ENCODE measurements at regions of chr3 and their contacts with region 1.

Region 1: DNA sequence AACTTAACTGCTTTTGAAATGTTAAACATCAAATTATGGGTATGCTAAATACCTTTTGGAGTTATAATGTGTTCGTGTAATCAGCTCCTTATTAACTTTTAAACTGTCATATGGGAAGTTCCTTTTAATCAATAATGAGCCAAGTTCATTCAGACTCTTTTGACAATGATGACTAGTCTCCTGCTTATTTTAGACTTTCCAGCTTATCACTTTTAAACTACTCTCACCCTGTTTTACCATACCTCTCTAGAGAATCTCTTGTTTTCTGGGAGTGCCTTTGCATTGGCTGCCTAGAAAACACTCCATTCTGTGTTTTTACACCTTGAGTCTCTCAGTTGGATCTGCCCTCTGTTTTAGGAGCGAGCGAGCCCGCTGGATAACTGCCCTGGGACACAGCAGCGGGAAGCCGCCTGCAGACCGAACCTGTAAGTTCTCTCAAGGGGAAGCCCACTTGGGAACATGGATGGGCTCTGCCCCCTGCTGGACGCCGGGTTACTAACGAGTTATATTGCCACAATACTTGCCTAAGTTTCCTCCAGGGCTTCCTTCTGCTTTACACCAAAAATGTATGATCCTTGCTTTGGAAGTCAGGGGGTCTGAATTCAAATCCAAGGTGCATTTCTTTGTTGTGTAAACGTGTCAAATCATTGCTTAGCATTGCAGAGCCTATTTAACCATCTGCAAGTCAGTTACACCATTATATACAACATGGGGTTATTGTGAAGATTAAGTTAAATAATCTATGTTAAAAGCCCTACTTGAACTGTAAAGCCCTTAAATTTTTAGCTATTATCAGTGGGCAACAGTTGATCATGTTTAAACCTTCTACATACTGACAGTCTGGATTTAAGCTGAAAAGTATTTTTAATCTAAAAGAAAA is 71.3 kb downstream of the DHX36 start:
- DNase-seq: peak; percentile 83 to 94
- H3K4me3 ChIP-seq: no peak overlapping the region
- H3K27ac ChIP-seq: no peak overlapping the region
- H3K4me1 ChIP-seq: peaks cover 0 to 2% (median under 1%) of the 10 kb centered on the region in 4 experiments; a peak in 1 of 7 replicates
- H3K27me3 ChIP-seq: no peaks in the 10 kb centered on the region
- CTCF ChIP-seq: peak; percentile 82 to 98 (median 92)
- EP300 ChIP-seq: no peak
- POLR2A ChIP-seq: no peak
- RAD21 ChIP-seq: peak; percentile 96 to 98

Region 2: DNA sequence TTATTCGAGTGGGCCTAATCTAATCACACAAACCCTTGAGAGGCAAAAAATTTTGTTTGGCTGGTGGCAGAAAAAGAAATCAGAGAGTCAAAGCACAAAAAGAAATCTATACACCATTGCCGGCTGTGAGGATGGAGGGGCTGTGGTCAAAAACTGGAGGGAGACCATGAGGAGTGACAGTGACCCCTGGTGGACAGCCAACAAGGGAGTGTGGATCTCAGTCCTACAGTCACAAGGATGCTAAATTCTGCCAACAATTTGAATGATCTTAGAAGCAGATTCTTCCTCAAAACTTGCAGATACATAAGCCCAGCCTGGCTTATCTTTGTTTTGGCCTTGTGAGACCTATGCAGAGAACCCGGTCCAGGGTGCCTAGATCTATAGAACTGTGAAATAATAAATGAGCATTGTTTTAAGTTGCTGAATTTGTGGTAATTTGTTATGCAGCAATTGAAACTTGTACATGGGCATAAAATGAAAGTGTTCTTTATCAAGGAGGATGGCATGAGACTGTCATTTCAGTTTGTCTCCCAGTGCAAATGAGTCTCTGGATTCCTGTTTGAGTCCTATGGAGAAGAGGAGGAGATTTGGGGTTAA is 234.8 kb before region 1 on chr3:
- CTCF ChIA-PET with region 1: interaction called, 11 read pairs
- POLR2A ChIA-PET with region 1: no interaction called
- DNase-seq: peak; percentile 21 to 73
- H3K4me3 ChIP-seq: no peak overlapping the region
- H3K27ac ChIP-seq: no peak overlapping the region
- H3K4me1 ChIP-seq: peaks cover 0 to 3% (median 0%) of the 10 kb centered on the region in 4 experiments; a peak in 1 of 7 replicates
- H3K27me3 ChIP-seq: no peaks in the 10 kb centered on the region
- CTCF ChIP-seq: peak; percentile 64 to 85 (median 72)
- EP300 ChIP-seq: no peak
- POLR2A ChIP-seq: no peak
- RAD21 ChIP-seq: peak; percentile 70 to 74

Region 3: GRCh38 chr3:154089452-154090420 is 163.3 kb before region 1 on chr3:
- CTCF ChIA-PET with region 1: interaction called, 26 read pairs
- POLR2A ChIA-PET with region 1: no interaction called
- DNase-seq: no peak
- H3K4me3 ChIP-seq: no peak overlapping the region
- H3K27ac ChIP-seq: no peak overlapping the region
- H3K4me1 ChIP-seq: peaks cover 0 to 4% (median 0%) of the 10 kb centered on the region in 4 experiments; a peak in 1 of 7 replicates
- H3K27me3 ChIP-seq: no peaks in the 10 kb centered on the region
- CTCF ChIP-seq: no peak
- EP300 ChIP-seq: no peak
- POLR2A ChIP-seq: no peak
- RAD21 ChIP-seq: no peak

Region 4: DNA sequence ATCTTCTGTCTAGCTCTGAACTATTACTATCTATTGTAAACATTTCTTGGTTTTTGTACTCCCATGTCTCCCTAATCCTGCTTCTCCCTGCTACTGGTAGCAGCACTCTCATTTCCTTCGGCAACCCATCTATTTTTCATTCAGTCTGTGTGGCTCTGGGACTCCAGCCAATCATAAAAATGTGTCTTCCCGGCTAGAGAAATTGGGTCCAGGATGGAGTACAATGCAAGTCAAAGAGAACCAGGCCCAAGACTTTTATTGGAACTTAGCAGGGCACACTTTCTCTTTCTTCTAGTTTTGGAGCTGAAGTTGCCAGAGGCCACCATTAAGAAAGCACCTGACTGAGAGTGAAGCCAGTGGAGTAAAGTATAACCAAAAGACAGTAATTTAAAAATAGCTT is 154.6 kb before region 1 on chr3:
- CTCF ChIA-PET with region 1: interaction called, 28 read pairs
- POLR2A ChIA-PET with region 1: interaction called, 3 read pairs
- DNase-seq: no peak
- H3K4me3 ChIP-seq: no peak overlapping the region
- H3K27ac ChIP-seq: no peak overlapping the region
- H3K4me1 ChIP-seq: no peaks in the 10 kb centered on the region
- H3K27me3 ChIP-seq: no peaks in the 10 kb centered on the region
- CTCF ChIP-seq: no peak
- EP300 ChIP-seq: no peak
- POLR2A ChIP-seq: no peak
- RAD21 ChIP-seq: no peak

Region 5: GRCh38 chr3:154112146-154112852 is 140.7 kb before region 1 on chr3:
- CTCF ChIA-PET with region 1: interaction called, 12 read pairs
- POLR2A ChIA-PET with region 1: interaction called, 3 read pairs
- DNase-seq: no peak
- H3K4me3 ChIP-seq: no peak overlapping the region
- H3K27ac ChIP-seq: no peak overlapping the region
- H3K4me1 ChIP-seq: no peaks in the 10 kb centered on the region
- H3K27me3 ChIP-seq: no peaks in the 10 kb centered on the region
- CTCF ChIP-seq: no peak
- EP300 ChIP-seq: no peak
- POLR2A ChIP-seq: no peak
- RAD21 ChIP-seq: no peak

Region 6: DNA sequence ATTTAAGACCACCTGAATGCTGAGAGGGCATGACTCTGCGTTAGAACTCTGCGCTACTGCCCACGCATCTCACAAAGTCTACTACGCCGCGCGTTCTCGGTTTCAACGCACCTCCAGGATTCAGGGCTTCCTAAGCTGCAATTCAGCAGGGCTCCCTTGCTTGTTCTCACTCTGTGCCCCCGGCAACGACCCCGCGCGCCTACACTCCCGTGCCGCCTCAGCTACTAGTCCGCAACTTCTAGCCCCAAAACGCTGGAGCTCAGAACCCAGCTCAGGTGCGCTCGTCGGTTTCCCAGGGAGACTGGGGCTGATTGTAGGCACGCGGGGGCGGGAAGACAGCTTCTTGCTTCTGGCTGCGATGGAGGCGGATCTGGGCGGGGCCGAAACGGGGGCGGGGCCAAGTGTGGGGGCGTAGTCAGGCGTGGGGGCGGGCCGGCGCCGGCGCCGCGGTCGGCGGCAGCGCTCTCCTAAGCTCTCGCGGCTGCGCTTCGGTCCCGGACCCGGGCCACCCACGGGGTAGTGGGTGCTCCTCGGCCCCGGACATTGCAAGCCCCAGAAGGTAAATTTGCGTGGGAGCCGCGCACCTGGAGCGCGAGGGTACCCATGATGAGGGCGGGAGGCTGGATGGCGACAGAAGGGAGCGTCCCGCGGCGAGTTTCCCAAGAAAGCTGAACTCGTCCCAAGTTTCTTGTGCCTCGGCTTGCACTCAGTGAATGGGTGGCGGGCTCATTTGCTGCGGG is 131.9 kb before region 1 on chr3 and contains the start of gene ARHGEF26:
- CTCF ChIA-PET with region 1: interaction called, 24 read pairs
- POLR2A ChIA-PET with region 1: no interaction called
- DNase-seq: peak; percentile 59 to 98
- H3K4me3 ChIP-seq: peak within 1 kb of the TSS; percentile 75 to 85 (median 82)
- H3K27ac ChIP-seq: no peak within 1 kb of the TSS
- H3K4me1 ChIP-seq: peaks cover 0 to 5% (median 1%) of the 10 kb centered on the region in 4 experiments; a peak in 2 of 7 replicates
- H3K27me3 ChIP-seq: peaks cover 0 to 20% (median 11%) of the 10 kb centered on the region in 4 experiments; a peak in 5 of 7 replicates
- CTCF ChIP-seq: no peak
- EP300 ChIP-seq: no peak
- POLR2A ChIP-seq: peak in 1 of 2 experiments; percentile 42; a peak in 1 of 3 replicates
- RAD21 ChIP-seq: 0 out of 4 replicates have a peak, but pooled peaks of 1 of the 2 experiments have one; percentile 7
- total RNA-seq, gene ARHGEF26: 13.3 and 15.6 TPM in 2 replicates

Region 7: DNA sequence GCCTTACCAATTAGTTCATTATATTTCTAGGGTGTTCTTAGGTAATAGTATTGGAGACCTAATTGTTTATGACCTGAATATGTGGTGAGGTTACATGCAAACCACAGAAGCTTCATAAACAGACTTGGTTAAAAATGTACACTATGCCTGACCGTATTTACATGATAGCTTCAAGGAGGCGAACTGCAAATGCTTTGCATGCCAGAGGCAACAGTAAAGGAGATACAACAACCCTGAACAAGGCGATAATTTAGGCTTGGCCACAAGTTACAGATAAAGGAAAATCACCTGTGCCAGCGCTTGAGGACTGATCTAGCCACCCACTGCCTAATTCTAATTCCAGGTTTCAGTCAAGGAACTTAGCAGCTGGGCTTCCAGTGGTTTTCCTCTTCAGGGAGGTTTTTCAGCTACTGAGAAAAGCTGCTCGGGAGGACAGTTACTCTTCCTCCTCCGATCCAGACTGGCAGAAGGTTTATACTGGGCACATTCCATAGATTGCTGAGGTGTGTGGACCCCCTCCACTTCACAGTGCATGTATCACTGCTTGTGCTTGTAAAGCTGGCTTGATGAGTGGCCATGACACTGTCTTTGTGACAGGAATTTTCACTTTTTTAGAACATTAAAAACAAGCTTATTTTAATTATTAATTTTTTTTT is 24.3 kb before region 1 on chr3:
- CTCF ChIA-PET with region 1: interaction called, 31 read pairs
- POLR2A ChIA-PET with region 1: no interaction called
- DNase-seq: no peak
- H3K4me3 ChIP-seq: no peak overlapping the region
- H3K27ac ChIP-seq: no peak overlapping the region
- H3K4me1 ChIP-seq: peaks cover 0 to 5% (median 1%) of the 10 kb centered on the region in 4 experiments; a peak in 2 of 7 replicates
- H3K27me3 ChIP-seq: no peaks in the 10 kb centered on the region
- CTCF ChIP-seq: no peak
- EP300 ChIP-seq: no peak
- POLR2A ChIP-seq: no peak
- RAD21 ChIP-seq: no peak

Region 8: DNA sequence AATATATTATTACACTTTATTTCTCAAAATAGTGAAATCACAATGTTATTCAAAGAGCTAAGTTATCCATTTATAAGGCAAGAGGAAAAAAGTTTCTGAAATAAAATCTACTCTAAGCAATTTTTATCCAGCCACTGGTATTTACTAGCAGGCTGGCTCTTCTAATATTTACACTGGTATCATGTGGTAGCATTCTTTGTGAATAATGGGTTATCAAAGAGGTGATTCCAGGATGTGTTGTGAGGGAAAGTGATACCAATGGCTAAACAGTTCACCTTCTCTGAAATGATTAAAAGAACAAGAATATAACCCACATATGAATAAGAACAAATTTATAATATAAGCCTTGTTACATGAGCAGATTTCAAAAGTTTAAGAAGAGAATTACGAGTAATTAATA is 27.2 kb after region 1 on chr3:
- CTCF ChIA-PET with region 1: no interaction called
- POLR2A ChIA-PET with region 1: no interaction called
- DNase-seq: no peak
- H3K4me3 ChIP-seq: no peak overlapping the region
- H3K27ac ChIP-seq: no peak overlapping the region
- H3K4me1 ChIP-seq: no peaks in the 10 kb centered on the region
- H3K27me3 ChIP-seq: no peaks in the 10 kb centered on the region
- CTCF ChIP-seq: no peak
- EP300 ChIP-seq: no peak
- POLR2A ChIP-seq: no peak
- RAD21 ChIP-seq: no peak

Region 9: DNA sequence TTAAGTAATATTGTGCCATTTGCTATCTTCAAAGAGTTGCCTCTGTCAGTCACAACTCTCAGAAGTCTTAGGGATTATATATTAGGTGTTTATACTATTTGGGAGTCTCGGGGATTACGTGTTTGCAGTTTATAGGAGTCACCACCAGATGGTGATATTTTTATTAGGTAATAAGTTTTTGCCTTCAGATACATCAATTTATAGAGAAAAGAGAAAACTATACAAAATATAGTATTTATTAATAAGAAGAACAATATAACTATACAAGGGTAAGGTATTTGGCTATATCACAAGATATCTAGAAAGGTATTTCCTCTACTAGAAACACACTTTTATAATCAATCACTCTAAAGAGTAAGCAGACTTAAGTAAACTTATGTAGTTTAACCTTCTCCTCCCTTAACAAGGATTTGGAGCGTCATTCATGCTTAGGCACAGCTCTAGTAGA is 82.0 kb after region 1 on chr3:
- CTCF ChIA-PET with region 1: no interaction called
- POLR2A ChIA-PET with region 1: no interaction called
- DNase-seq: no peak
- H3K4me3 ChIP-seq: no peak overlapping the region
- H3K27ac ChIP-seq: no peak overlapping the region
- H3K4me1 ChIP-seq: no peaks in the 10 kb centered on the region
- H3K27me3 ChIP-seq: no peaks in the 10 kb centered on the region; a peak in 1 of 7 replicates
- CTCF ChIP-seq: peak in 1 of 3 experiments; percentile 11; a peak in 1 of 4 replicates
- EP300 ChIP-seq: no peak
- POLR2A ChIP-seq: no peak
- RAD21 ChIP-seq: peak in 1 of 2 experiments; percentile 44

Region 10: GRCh38 chr3:154356009-154356408 is 103.0 kb after region 1 on chr3:
- CTCF ChIA-PET with region 1: no interaction called
- POLR2A ChIA-PET with region 1: no interaction called
- DNase-seq: no peak
- H3K4me3 ChIP-seq: no peak overlapping the region
- H3K27ac ChIP-seq: no peak overlapping the region
- H3K4me1 ChIP-seq: no peaks in the 10 kb centered on the region
- H3K27me3 ChIP-seq: peaks cover 0 to 3% (median 0%) of the 10 kb centered on the region in 4 experiments; a peak in 1 of 7 replicates
- CTCF ChIP-seq: no peak
- EP300 ChIP-seq: no peak
- POLR2A ChIP-seq: no peak
- RAD21 ChIP-seq: no peak

Measured in H1 (cell line).